Right cardiac atrium (tissue), 5 donors: ENCODE measurements at regions of chr4 and their contacts with region 1.

Region 1: DNA sequence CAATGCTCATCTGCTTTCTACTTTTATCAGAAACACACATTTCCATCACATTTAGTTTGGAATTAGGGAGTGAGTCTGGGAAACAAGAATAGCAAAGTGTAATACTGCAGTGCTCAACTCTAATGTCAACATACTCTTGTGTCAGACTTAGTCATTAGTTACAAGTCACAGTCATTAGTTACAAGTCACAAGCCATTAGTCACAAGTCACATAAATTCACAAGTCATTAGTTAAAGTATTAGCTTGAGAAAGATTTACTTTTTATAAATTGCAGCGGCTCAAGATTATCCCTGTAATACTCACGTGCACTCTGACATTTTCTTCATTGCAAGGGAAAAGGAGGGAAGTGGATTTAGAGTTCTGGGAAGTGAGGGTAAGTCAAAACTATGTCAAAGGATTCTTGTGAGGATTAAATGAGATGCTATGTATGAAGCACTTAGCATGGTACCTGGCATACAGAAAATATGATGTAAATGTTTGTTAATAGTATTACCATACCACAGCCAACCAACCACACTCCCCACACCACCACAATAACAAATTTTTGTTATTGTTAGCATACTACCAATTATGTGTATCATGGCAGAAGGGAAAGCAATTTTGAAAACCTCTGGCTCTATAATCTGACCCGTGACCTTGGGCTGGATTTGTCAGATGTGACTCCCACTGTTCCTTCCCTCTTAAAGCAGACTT is 116.6 kb downstream of the ARHGAP24 start:
- DNase-seq: no peak
- ATAC-seq: no peak
- H3K4me3 ChIP-seq: no peak overlapping the region
- H3K27ac ChIP-seq: no peak overlapping the region
- H3K4me1 ChIP-seq: peaks cover 2% of the 10 kb centered on the region
- H3K27me3 ChIP-seq: no peaks in the 10 kb centered on the region

Region 2: DNA sequence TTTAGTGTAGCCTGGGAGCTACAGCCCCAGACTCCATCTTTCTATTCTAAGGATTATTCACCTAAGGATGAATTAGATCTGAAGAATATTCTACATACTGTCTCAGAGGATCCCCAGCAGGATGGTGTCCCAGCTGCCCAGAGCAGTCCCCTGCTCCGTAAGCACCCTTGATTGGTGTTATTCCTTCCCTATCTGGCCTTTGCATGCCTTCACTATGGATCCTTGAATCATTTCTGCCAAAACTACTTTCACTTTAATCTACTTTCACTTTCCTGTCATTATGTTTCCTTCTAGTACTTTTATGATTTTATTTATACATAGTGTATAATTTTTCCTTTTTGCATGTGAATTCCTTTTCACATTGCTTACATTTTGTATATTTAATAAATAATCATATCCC is 77.4 kb before region 1 on chr4:
- intact Hi-C with region 1: loop called in 1 of 4 experiments (anchors 10 kb)
- DNase-seq: no peak
- ATAC-seq: peak in 1 of 2 donors; percentile 49
- H3K4me3 ChIP-seq: peak overlapping the region; percentile 25
- H3K27ac ChIP-seq: no peak overlapping the region
- H3K4me1 ChIP-seq: peaks cover 6% of the 10 kb centered on the region
- H3K27me3 ChIP-seq: no peaks in the 10 kb centered on the region

Region 3: GRCh38 chr4:85531560-85532341 is 59.8 kb before region 1 on chr4:
- intact Hi-C with region 1: no loop called
- DNase-seq: no peak
- ATAC-seq: no peak
- H3K4me3 ChIP-seq: no peak overlapping the region
- H3K27ac ChIP-seq: no peak overlapping the region
- H3K4me1 ChIP-seq: no peaks in the 10 kb centered on the region
- H3K27me3 ChIP-seq: no peaks in the 10 kb centered on the region